Head of caudate nucleus (tissue), 42 donors: ENCODE measurements at regions of chr1 and their contacts with region 1.

Region 1: DNA sequence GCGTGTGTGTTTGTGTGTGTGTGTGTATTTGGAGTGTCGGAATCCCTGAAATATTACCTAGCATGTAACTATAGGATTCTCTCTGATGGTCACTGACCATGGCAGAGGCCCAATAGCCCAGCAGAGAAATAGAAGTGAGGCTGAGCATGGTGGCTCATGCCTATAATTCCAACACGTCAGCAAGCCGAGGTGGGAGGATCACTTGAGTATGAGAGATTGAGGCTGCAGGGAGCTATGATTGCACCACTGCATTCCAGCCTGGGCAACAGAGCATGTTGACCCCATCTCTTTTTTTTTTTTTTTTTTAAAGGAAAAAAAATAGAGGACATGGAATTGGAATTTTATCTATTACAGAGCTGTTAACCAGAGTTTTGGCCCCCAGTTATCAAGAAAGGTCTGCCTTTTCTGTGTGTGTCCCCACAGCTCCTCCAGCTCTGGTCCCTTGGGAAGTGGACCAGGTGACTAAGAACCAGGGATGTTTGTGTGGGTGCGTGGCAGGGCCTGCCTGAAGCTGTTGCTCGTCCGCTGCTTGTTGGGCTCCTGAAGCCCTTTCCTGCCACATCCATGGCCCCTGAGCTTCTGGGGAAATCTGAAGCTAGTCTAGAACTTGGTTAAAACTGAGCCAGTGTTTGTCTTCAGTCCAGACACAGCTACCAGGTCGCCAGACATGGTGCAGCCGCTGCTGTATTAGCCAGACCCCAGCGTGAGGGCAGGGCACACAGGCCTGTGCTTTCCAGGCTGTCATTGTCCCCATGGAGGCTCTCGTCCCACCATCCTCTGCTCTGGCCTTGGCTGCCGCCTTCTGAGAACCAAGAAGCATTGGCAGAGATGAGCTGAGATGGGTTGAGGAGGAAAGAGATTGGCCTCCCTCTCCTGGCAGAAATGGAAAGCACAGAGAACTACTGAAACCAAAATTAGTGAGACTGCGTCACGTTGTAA is 25.5 kb downstream of the CAPN9 start:
- DNase-seq: peak; percentile 50 to 93 (median 80)

Region 2: DNA sequence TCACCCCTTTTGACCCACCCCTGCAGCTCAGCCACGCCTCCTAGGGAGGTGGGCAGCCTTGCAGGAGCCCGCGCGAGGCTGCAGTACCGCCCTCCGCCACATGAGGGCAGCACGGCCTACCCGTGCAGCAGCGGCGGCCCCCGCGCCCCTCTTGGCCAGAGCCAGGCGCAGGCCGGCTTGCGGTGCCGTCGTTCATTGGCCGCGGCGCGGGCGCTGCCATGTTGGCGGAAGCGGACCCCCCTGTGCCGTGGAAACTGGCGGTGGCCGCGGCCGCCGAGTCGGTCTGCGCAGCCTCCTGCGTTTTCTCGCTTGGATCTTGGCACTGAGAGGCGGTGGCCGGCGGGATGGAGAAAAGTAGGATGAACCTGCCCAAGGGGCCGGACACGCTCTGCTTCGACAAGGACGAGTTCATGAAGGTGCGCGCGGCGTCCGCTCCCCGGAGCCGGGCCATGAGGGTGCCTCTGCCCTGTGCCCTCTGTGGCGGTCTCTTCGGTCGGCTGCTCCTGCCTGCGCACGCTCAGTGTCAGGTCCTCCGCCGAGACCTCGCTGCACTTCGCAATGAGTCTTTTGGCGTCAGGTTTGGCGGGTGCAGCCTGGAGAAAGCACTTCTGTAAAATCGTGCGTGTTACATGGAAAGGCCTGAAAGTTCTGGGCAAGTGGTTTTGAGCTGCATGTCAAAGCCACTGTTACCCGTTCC is 130.3 kb before region 1 on chr1 and contains the start of gene COG2:
- intact Hi-C with region 1: loop called (anchors 5 kb)
- DNase-seq: peak; percentile 86 to 99 (median 96)